Activated naive CD4-positive, alpha-beta T cell treated with anti-CD3 and anti-CD28 coated beads for 36 hours (primary cell): ENCODE measurements at regions of chr7 and their contacts with region 1.

Region 1: GRCh38 chr7:155412537-155413253 is 45.2 kb upstream of the EN2 start:
- DNase-seq: peak; percentile 76
- H3K4me3 Mint-ChIP-seq: no peak overlapping the region
- H3K27ac Mint-ChIP-seq: no peak overlapping the region
- H3K4me1 Mint-ChIP-seq: peaks cover 6% of the 10 kb centered on the region
- H3K27me3 Mint-ChIP-seq: peaks cover 17% of the 10 kb centered on the region

Region 2: DNA sequence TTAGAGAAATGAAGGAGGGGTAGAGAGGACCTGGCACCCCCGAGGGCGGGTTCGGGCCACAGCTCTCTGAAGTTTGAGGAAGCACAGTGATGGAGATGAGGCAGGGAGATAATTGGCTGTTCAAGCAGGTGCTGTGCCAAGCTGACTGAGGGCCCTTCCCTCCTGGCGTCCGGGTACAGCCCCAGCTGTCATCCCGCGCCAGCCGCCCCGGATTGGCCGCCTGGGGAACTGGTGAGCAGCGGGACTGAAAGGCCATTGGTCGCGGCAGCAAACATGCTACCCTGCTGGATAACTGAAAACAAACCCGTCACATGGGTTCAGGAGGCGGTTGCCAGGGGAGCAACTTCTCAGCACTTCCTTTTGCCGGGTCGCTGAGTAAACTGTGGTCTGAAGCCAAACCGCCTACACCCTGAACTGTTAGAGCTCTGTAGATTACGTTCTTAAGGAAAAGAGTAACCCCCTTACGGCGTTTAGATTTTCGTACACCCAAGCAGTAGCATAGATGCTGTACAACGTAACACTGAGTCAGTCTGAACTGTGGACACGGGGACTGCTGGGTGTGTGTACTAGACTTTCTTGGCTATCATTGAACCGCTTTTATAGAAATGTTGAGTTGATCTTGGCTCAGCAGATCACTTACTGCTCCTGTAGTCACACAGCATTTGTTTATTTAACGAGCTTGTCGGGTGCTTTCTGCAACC is 113.7 kb before region 1 on chr7:
- CTCF ChIA-PET with region 1: no interaction called
- intact Hi-C with region 1: no loop called
- DNase-seq: peak; percentile 98
- H3K4me3 Mint-ChIP-seq: peak overlapping the region; percentile 88
- H3K27ac Mint-ChIP-seq: peak overlapping the region; percentile 92
- H3K4me1 Mint-ChIP-seq: peaks cover 30% of the 10 kb centered on the region
- H3K27me3 Mint-ChIP-seq: no peaks in the 10 kb centered on the region

Region 3: GRCh38 chr7:155738652-155739537 is 326.2 kb after region 1 on chr7:
- CTCF ChIA-PET with region 1: no interaction called
- intact Hi-C with region 1: loop called (anchors 1 kb)
- DNase-seq: peak; percentile 87
- H3K4me3 Mint-ChIP-seq: no peak overlapping the region
- H3K27ac Mint-ChIP-seq: no peak overlapping the region
- H3K4me1 Mint-ChIP-seq: peaks cover 47% of the 10 kb centered on the region
- H3K27me3 Mint-ChIP-seq: no peaks in the 10 kb centered on the region